Activated CD4-positive, alpha-beta memory T cell treated with anti-CD3 and anti-CD28 coated beads for 36 hours (primary cell): ENCODE measurements at regions of chr21 and their contacts with region 1.

Region 1: DNA sequence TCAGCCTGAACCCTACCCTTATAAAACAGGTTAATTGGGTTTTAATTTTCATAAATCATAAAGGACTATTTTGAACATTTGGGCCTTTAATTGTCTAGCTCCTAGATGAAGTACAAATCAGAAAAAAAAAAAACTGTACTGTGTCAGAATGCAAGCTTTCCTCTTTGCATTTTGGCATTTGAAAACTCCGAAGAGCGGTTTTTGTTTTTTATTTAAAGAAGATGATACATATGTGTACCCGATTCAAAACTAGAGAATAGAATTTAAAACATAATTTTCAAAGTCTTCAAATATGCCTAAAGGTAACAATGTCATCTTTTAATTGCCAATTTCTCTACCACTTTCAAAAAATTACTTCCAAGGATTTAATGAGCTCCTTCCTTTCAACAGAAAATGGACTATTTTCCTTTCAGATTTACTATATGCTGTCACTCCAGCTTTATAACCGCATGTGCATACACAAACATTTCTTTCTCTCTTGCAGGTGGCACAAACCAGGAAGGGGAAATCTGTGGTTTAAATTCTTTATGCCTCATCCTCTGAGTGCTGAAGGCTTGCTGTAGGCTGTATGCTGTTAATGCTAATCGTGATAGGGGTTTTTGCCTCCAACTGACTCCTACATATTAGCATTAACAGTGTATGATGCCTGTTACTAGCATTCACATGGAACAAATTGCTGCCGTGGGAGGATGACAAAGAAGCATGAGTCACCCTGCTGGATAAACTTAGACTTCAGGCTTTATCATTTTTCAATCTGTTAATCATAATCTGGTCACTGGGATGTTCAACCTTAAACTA is 33.7 kb downstream of the MRPL39 start:
- DNase-seq: peak; percentile 80
- H3K4me3 Mint-ChIP-seq: peak overlapping the region; percentile 68
- H3K27ac Mint-ChIP-seq: peak overlapping the region; percentile 89
- H3K4me1 Mint-ChIP-seq: peaks cover 80% of the 10 kb centered on the region
- H3K27me3 Mint-ChIP-seq: no peaks in the 10 kb centered on the region

Region 2: DNA sequence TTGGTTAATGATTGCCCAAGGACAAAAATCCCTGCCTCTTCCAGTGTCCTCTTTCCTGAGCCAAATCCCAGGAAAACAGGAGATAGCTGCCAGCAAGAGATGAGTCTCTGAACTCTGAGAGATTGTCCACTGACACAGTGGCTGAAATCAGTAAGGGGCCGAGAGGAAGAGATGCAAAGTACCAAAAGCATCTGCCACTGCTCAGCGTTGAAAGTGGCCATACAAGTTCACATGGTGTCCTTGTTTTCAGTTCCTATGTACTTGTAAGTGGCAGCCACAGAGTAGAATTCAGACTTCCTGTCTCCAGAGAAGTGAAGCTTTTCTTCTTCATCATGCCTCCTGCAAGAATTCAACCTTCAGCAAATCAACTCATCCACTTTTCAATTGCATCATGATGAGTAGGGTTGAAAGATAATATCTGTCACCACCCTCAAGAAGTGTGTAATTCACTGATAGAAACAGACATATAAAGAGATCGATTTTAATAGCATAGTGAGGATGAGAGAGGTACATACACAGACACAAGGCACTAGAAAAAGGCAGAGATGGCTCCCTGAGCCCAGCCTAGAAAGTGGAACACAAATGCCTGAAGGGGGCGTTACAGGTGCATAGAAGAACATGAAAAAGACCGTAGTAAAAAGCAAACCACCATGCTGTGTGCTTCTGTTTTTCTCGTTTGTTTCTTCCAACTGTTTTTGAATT is 152.1 kb before region 1 on chr21:
- CTCF ChIA-PET with region 1: interaction called, 10 read pairs
- POLR2A ChIA-PET with region 1: interaction called, 19 read pairs
- intact Hi-C with region 1: loop called (anchors 1 kb)
- DNase-seq: peak; percentile 79
- H3K4me3 Mint-ChIP-seq: peak overlapping the region; percentile 67
- H3K27ac Mint-ChIP-seq: peak overlapping the region; percentile 89
- H3K4me1 Mint-ChIP-seq: peaks cover 62% of the 10 kb centered on the region
- H3K27me3 Mint-ChIP-seq: no peaks in the 10 kb centered on the region

Region 3: DNA sequence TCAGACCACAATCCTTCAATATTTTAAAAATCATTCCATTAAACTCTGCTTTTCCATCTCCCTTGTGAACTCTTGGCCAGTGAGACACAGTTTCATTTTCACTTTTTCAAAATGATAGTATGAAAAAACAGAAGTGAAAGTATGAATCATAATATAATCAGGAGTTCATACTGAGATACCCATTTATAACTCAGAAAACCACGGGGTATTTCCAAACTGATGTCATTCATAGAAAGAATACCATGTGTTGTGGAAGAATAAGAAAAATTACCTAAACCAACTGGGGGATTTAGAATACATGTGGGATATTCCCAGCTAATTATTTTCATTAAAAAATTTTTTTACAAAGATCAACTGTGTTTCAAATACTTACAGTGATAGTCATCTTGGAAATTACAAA is 116.2 kb before region 1 on chr21:
- CTCF ChIA-PET with region 1: interaction called, 3 read pairs
- POLR2A ChIA-PET with region 1: interaction called, 41 read pairs
- intact Hi-C with region 1: loop called (anchors 1 kb)
- DNase-seq: no peak
- H3K4me3 Mint-ChIP-seq: peak overlapping the region; percentile 68
- H3K27ac Mint-ChIP-seq: peak overlapping the region; percentile 93
- H3K4me1 Mint-ChIP-seq: peaks cover 77% of the 10 kb centered on the region
- H3K27me3 Mint-ChIP-seq: no peaks in the 10 kb centered on the region

Region 4: DNA sequence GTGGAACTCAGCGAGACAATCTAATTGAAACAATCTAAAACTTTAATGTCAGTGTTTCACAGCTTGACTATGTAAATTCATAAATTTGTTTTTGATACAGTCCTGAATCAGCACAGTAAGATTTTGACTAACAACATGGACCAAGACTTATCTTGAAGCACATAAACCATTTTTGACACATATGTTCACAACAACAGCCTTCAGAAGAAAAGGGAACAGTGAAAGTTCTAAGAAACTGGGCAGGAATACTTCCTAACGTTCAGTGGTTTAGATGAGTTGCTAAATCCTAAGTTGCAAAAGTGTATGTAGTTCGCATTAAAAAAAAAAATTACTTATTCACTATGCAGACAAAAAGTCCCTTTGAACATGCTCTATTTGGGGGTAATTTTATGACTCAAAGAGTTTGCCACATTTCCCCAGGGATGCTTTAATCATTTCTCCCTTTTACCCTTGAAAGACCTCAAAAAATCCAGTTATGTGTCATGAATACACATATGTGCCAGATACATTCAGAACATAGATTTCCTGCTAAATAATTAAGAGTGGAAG is 86.5 kb before region 1 on chr21:
- CTCF ChIA-PET with region 1: interaction called, 5 read pairs
- POLR2A ChIA-PET with region 1: interaction called, 26 read pairs
- intact Hi-C with region 1: loop called (anchors 1 kb)
- DNase-seq: no peak
- H3K4me3 Mint-ChIP-seq: peak overlapping the region; percentile 58
- H3K27ac Mint-ChIP-seq: peak overlapping the region; percentile 87
- H3K4me1 Mint-ChIP-seq: peaks cover 76% of the 10 kb centered on the region
- H3K27me3 Mint-ChIP-seq: no peaks in the 10 kb centered on the region

Region 5: GRCh38 chr21:25507522-25507921 is 66.1 kb before region 1 on chr21:
- CTCF ChIA-PET with region 1: interaction called, 3 read pairs
- POLR2A ChIA-PET with region 1: interaction called, 127 read pairs
- intact Hi-C with region 1: loop called (anchors 1 kb)
- DNase-seq: no peak
- H3K4me3 Mint-ChIP-seq: peak overlapping the region; percentile 24
- H3K27ac Mint-ChIP-seq: peak overlapping the region; percentile 85
- H3K4me1 Mint-ChIP-seq: peaks cover 55% of the 10 kb centered on the region
- H3K27me3 Mint-ChIP-seq: no peaks in the 10 kb centered on the region

Region 6: DNA sequence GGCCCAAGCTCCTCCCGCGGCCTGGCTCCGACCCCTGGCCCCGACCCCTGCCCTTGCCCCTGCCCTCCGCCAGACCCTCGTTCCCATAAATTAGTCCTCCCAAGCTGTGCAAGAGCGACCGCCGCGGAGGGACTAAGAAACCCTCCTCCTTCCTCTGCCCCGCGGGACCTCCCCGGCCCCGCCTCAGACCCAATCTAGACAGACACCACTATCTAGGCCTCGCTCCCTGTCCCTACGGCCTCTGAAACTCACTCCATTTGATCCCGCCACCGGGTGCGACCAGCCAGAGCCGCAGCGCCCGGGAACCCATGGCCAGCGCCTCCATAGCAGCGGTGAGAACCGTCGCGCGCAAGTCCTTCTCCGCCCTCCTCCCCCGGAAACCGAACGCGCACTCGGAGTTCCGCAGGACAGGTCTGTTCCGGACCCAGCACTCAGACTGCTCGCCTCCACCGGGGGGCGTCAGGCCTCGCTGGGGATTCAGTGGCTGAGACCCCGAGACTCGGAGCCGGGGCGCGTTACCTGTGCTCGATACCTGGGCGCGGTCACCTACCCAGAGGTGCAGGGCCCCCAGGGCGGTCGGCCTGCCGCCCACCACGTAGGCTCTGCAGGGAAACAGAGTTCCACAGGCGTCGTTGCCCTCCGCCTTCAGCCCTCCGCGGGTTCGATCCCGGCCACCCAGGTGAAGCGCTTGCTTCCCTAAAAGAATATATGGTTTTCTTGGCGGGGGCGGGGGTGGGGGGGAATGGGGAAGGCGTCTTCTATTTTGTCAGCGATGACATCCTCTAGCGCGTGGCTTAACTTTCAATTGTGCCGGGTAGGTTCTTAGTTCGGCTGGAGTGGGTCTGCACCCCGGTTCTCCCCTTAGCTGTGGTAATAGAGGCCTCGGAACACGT is 33.8 kb after region 1 on chr21 and contains the start of gene MRPL39:
- CTCF ChIA-PET with region 1: interaction called, 3 read pairs
- POLR2A ChIA-PET with region 1: interaction called, 5 read pairs
- intact Hi-C with region 1: loop called (anchors 1 kb)
- DNase-seq: peak; percentile 93
- H3K4me3 Mint-ChIP-seq: peak within 1 kb of the TSS; percentile 97
- H3K27ac Mint-ChIP-seq: peak within 1 kb of the TSS; percentile 91
- H3K4me1 Mint-ChIP-seq: peaks cover 41% of the 10 kb centered on the region
- H3K27me3 Mint-ChIP-seq: no peaks in the 10 kb centered on the region
- total RNA-seq, gene MRPL39: 71.7 to 73.6 TPM